GM12878 (cell line): ENCODE measurements at regions of chr9 and their contacts with region 1.

Region 1: GRCh38 chr9:130707225-130707976 is 13.8 kb downstream of the EXOSC2 start:
- DNase-seq: no peak
- ATAC-seq: peak; percentile 70
- H3K4me3 ChIP-seq: no peak overlapping the region
- H3K27ac ChIP-seq: no peak overlapping the region
- H3K4me1 ChIP-seq: no peaks in the 10 kb centered on the region
- H3K27me3 ChIP-seq: no peaks in the 10 kb centered on the region
- CTCF ChIP-seq: peak; percentile 47 to 81 (median 73)
- EP300 ChIP-seq: no peak
- POLR2A ChIP-seq: no peak
- RAD21 ChIP-seq: peak; percentile 84

Region 2: GRCh38 chr9:129665389-129665775 is 1042.0 kb before region 1 on chr9 and contains the start of gene PRRX2:
- CTCF ChIA-PET with region 1: no interaction called
- POLR2A ChIA-PET with region 1: no interaction called
- RAD21 ChIA-PET with region 1: no interaction called
- SMC1A ChIA-PET with region 1: no interaction called
- in situ Hi-C with region 1: no loop called
- intact Hi-C with region 1: no loop called
- DNase-seq: no peak
- ATAC-seq: no peak
- H3K4me3 ChIP-seq: no peak within 1 kb of the TSS
- H3K27ac ChIP-seq: no peak within 1 kb of the TSS
- H3K4me1 ChIP-seq: no peaks in the 10 kb centered on the region
- H3K27me3 ChIP-seq: no peaks in the 10 kb centered on the region; a peak in 2 of 4 replicates
- CTCF ChIP-seq: no peak
- EP300 ChIP-seq: no peak
- POLR2A ChIP-seq: no peak
- RAD21 ChIP-seq: no peak
- polyA plus RNA-seq, gene PRRX2: not detected

Region 3: DNA sequence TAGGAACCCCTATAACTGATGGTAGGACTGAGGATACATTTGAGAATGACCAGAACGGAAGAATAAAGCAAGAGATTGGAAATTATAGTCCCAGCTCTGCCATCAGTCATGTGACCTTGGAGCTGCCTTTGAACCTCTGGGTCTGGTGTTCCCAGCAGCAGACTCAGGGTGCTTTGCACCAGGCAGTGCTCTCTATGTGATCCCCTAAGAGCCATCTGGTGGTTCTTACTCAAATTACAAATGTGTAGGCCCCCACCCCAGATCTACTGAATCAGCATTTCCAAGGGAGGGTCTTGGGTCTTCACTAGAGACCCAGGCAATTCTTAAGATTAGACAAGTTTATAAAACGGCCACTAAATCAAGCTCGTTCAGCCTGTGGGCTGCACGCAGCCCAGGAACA is 83.2 kb before region 1 on chr9:
- CTCF ChIA-PET with region 1: no interaction called
- POLR2A ChIA-PET with region 1: no interaction called
- RAD21 ChIA-PET with region 1: no interaction called
- SMC1A ChIA-PET with region 1: no interaction called
- in situ Hi-C with region 1: no loop called
- intact Hi-C with region 1: no loop called
- DNase-seq: no peak
- ATAC-seq: no peak
- H3K4me3 ChIP-seq: no peak overlapping the region
- H3K27ac ChIP-seq: no peak overlapping the region
- H3K4me1 ChIP-seq: no peaks in the 10 kb centered on the region
- H3K27me3 ChIP-seq: no peaks in the 10 kb centered on the region
- CTCF ChIP-seq: no peak
- EP300 ChIP-seq: no peak
- POLR2A ChIP-seq: no peak
- RAD21 ChIP-seq: no peak

Region 4: GRCh38 chr9:130693426-130694191 is 13.8 kb before region 1 on chr9 and contains the start of gene EXOSC2:
- CTCF ChIA-PET with region 1: interaction called, 47 read pairs
- POLR2A ChIA-PET with region 1: no interaction called
- RAD21 ChIA-PET with region 1: interaction called, 4 read pairs
- SMC1A ChIA-PET with region 1: interaction called, 4 read pairs
- in situ Hi-C with region 1: no loop called
- intact Hi-C with region 1: no loop called
- DNase-seq: peak; percentile 92
- ATAC-seq: peak; percentile 99
- H3K4me3 ChIP-seq: peak within 1 kb of the TSS; percentile 98
- H3K27ac ChIP-seq: peak within 1 kb of the TSS; percentile 86
- H3K4me1 ChIP-seq: peaks cover 13% of the 10 kb centered on the region
- H3K27me3 ChIP-seq: no peaks in the 10 kb centered on the region
- CTCF ChIP-seq: no peak
- EP300 ChIP-seq: no peak
- POLR2A ChIP-seq: peak; percentile 97
- RAD21 ChIP-seq: no peak
- polyA plus RNA-seq, gene EXOSC2: 26.3 to 48.8 TPM

Region 5: GRCh38 chr9:130860458-130861316 is 153.3 kb after region 1 on chr9:
- CTCF ChIA-PET with region 1: interaction called, 267 read pairs
- POLR2A ChIA-PET with region 1: no interaction called
- RAD21 ChIA-PET with region 1: interaction called, 15 read pairs
- SMC1A ChIA-PET with region 1: interaction called, 21 read pairs
- in situ Hi-C with region 1: loop called (anchors 5 kb)
- intact Hi-C with region 1: loop called (anchors 1 kb)
- DNase-seq: no peak
- ATAC-seq: no peak
- H3K4me3 ChIP-seq: no peak overlapping the region
- H3K27ac ChIP-seq: no peak overlapping the region
- H3K4me1 ChIP-seq: no peaks in the 10 kb centered on the region
- H3K27me3 ChIP-seq: no peaks in the 10 kb centered on the region
- CTCF ChIP-seq: no peak
- EP300 ChIP-seq: no peak
- POLR2A ChIP-seq: no peak
- RAD21 ChIP-seq: no peak

Region 6: GRCh38 chr9:130940693-130941576 is 233.5 kb after region 1 on chr9:
- CTCF ChIA-PET with region 1: interaction called, 4 read pairs
- POLR2A ChIA-PET with region 1: no interaction called
- RAD21 ChIA-PET with region 1: no interaction called
- SMC1A ChIA-PET with region 1: no interaction called
- in situ Hi-C with region 1: loop called (anchors 5 kb)
- intact Hi-C with region 1: loop called (anchors 2 kb)
- DNase-seq: no peak
- ATAC-seq: peak; percentile 91
- H3K4me3 ChIP-seq: no peak overlapping the region
- H3K27ac ChIP-seq: no peak overlapping the region
- H3K4me1 ChIP-seq: no peaks in the 10 kb centered on the region; the same call in 1 of the 2 replicates
- H3K27me3 ChIP-seq: peaks cover 6 to 21% of the 10 kb centered on the region in 2 experiments
- CTCF ChIP-seq: peak; percentile 86 to 96 (median 95)
- EP300 ChIP-seq: no peak
- POLR2A ChIP-seq: no peak
- RAD21 ChIP-seq: peak; percentile 82